Aorta (tissue), 5 donors: ENCODE measurements at regions of chr5 and their contacts with region 1.

Region 1: DNA sequence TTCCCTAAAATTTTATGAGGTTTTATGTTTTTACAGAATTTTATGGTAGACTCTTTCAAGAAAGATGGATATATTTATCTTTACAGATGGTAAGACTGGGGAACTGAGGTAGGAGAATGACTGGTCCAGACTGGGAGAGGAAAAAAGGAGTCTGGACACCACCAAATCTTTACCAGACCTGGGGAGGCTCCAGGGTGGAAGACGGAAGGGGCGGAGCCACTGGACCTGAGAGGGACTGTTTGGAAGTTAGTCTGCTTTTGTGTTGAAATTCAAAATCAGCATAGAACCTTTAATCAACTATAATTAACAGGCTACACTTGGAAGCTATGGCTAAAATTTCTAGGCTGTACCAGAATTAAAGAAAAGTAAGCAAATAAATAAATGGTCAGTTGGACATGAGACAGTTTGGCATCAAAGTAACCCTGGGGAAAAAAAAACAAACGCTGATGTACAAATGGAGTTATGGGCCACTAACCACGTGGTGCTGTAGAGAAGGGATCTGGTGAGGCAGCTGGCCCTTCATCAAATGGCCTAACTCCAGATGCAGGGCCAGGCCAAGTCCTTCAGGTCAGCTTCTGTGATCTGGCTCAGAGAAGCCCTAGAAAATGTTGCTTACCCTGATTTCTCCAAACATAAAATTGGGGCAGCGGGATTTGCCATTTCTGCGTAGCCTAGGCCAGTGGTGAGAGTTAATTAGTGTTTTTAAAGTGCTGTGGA is 155.1 kb downstream of the ARSB start:
- DNase-seq: peak in 1 of 2 donors; percentile 78
- ATAC-seq: peak; percentile 92
- H3K4me3 ChIP-seq: no peak overlapping the region
- H3K27ac ChIP-seq: peak overlapping the region in 1 of 2 donors; percentile 45
- H3K4me1 ChIP-seq: no peaks in the 10 kb centered on the region
- H3K27me3 ChIP-seq: no peaks in the 10 kb centered on the region

Region 2: DNA sequence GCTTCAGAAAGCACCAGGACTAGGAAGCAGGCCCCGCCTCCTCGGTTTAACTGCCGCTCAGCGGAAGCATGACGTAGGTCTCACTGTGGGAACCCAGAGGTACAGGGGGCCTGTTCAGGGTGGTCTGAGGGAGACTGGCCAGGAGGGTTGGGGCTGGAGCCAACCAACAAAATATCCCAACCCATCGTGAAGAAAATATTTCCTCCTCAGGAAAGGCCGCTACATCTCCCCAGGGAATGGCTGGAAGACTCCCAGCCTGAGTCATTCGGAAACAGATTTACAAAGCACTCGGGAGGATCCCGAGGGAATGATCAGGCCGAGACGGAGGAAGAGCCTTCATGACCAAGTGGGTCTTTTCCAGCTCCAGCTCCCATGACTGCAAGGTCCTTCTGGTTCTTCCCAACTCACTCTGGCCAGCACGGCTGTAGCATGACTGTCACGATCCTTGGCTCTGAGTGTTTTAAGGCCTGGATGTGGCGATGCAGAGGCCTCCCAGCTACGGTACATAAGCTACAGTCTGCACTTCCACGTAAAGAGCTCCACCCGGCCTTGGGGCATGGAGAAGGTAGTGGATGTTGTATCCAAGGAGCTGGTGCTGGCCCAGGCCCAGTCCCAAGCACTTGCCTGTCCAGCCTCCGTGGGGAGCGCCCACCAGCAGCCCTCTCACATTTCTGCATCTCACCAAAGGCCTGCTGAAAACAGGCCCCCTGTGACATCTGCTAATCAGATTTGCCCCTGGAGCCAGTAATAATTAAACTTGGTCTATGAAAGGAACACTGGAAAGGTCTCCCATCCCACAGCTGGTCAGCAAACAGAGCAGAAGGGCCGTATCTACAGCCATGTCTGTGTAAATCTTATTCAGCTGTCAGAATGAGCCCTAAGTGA is 282.0 kb before region 1 on chr5:
- intact Hi-C with region 1: loop called in 1 of 2 experiments (anchors 10 kb)
- DNase-seq: peak; percentile 94 to 95
- ATAC-seq: peak; percentile 89
- H3K4me3 ChIP-seq: no peak overlapping the region
- H3K27ac ChIP-seq: peak overlapping the region; percentile 29 to 95
- H3K4me1 ChIP-seq: peaks cover 0 to 7% of the 10 kb centered on the region in 2 donors
- H3K27me3 ChIP-seq: no peaks in the 10 kb centered on the region

Region 3: DNA sequence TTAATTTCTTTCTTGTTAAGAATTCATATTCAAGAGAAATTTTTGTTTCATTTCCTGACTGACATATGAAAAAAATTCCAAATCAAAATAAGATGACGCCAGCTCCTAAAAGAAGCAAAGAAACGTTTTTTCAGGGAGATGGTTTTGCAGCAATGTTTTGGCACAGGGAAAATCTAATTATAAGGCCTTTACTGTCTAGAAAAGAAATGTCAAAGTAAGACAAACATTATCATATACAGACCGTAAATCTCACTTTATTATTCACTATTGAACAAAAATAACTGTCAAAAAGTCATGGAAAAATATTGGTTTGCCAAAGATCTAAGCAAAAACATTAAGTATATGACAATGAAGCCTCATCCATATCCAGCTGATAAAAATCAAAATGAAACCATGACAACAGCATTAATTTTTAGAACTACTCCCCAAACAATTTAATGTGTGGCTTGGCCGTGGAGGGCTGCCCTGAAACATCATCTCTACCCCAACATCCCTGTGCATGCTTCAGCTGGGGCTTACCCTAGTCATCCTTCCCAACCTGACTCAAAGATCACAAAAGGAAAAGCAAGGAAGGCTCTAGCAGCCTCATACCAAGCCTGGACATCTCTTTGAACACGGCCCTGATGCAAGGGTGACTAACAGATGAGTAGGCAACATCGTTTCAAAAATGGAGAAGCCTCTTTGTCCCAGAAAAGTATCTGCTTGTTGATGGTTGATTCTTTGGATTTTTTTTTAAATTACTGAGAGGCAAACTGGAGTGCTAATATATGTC is 59.6 kb after region 1 on chr5:
- intact Hi-C with region 1: loop called in 1 of 2 experiments (anchors 5 kb)
- DNase-seq: no peak
- ATAC-seq: no peak
- H3K4me3 ChIP-seq: no peak overlapping the region
- H3K27ac ChIP-seq: no peak overlapping the region
- H3K4me1 ChIP-seq: no peaks in the 10 kb centered on the region
- H3K27me3 ChIP-seq: no peaks in the 10 kb centered on the region